ENCODE measurements at regions of chr11 and their contacts with region 1.

Region 1: GRCh38 chr11:19110280-19110679 is 6.7 kb upstream of the ZDHHC13 start:
- DNase-seq: peak; percentile 56
- ATAC-seq: peak; percentile 79 to 91

Region 2: GRCh38 chr11:19076744-19077589 is 33.3 kb before region 1 on chr11:
- intact Hi-C with region 1: loop called in 1 of 2 experiments (anchors 5 kb)
- DNase-seq: peak; percentile 45
- ATAC-seq: peak; percentile 61 to 62

Measured in left cardiac atrium (tissue), 4 donors.